WTC11 (cell line): ENCODE measurements at regions of chr19 and their contacts with region 1.

Region 1: DNA sequence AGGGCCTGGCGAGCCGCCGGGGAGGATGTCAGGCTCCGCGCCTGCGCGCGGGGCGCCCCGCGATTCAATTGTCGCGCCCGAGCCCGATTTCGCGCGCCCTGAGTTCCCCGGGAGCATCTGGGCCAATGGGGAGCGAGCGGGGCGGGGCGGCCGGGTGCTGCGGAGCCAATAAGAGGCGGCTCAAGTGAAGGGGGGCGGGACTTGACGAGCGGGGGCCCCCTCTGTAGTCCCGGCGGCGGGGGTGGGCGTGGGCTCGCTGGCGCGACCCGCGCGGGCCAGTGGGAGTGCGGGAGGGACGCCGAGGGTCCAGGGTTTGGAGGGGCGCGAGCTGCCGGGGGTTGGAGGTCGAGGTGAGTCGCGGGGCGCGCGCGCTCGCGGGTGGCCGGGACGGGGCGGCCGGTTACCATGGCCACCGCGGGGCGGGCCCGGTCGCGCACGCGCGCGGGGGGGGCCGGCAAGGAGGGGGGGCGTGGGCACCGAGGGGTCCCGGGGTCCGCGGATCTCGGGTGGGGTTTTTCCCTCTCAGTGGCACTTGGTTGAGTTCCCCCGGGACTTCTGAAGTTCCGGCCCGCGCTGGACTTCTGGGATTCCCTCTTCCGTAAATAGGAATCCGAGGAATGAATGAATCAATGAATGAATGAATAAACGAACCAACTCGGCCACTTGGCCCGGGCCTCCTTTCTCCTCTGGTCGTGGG is 744 bp downstream of the UHRF1 start:
- DNase-seq: peak; percentile 92
- ATAC-seq: peak; percentile 86
- H3K4me3 Mint-ChIP-seq: peak overlapping the region; percentile 77
- H3K27ac Mint-ChIP-seq: no peak overlapping the region
- H3K4me1 Mint-ChIP-seq: peaks cover 22% of the 10 kb centered on the region
- H3K27me3 Mint-ChIP-seq: peaks cover 28% of the 10 kb centered on the region
- CTCF ChIP-seq: no peak

Region 2: DNA sequence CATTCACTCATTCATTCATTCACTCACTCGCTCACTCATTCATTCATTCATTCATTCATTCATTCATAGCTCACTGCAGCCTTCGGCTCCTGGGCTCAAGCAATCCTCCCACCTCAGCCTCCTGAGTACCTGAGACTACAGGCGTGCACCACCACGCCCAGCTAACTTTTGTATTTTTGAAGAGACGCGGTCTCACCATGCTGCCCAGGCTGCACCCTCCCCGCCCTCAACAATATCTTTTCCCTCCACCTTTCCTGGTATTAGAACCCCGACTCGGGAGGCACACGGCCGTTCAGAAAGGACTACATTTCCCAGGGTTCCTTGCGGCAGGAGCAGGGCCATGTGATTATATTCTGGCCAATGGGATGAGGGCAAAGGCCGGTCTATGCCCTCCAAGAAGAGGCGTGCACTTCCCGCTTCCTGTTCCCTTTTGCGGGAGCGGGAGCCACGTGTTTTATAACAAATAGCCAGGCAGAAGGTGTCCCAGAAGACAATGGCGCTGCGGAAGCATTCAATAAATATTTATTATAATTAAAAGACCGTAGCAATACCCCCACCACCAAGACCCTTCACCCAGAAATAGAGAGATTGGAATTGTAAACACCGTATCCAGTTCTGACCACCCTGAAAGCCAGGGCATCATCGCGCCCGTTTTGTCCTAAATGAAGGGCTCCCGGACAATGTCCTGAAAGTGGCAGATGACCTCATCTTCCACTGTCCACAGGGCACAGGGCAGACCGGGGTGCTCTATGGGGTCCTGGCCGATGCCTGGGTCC is 94.4 kb before region 1 on chr19:
- CTCF ChIA-PET with region 1: interaction called, 55 read pairs
- POLR2A ChIA-PET with region 1: no interaction called
- DNase-seq: peak; percentile 86
- ATAC-seq: peak; percentile 82
- H3K4me3 Mint-ChIP-seq: peak overlapping the region; percentile 58
- H3K27ac Mint-ChIP-seq: no peak overlapping the region
- H3K4me1 Mint-ChIP-seq: peaks cover 2% of the 10 kb centered on the region; the same call in 1 of the 2 replicates
- H3K27me3 Mint-ChIP-seq: peaks cover 25% of the 10 kb centered on the region
- CTCF ChIP-seq: no peak

Region 3: GRCh38 chr19:4867534-4868285 is 42.3 kb before region 1 on chr19 and contains the start of gene PLIN3:
- CTCF ChIA-PET with region 1: interaction called, 64 read pairs
- POLR2A ChIA-PET with region 1: interaction called, 4 read pairs
- DNase-seq: peak; percentile 96
- ATAC-seq: peak; percentile 95
- H3K4me3 Mint-ChIP-seq: peak within 1 kb of the TSS; percentile 80
- H3K27ac Mint-ChIP-seq: peak within 1 kb of the TSS; percentile 66
- H3K4me1 Mint-ChIP-seq: peaks cover 8% of the 10 kb centered on the region
- H3K27me3 Mint-ChIP-seq: no peaks in the 10 kb centered on the region; the same call in 1 of the 2 replicates
- CTCF ChIP-seq: no peak
- total RNA-seq, gene PLIN3: 61.3 to 72.1 TPM (median 71.2 TPM) in 3 replicates

Region 4: GRCh38 chr19:4889034-4889815 is 20.8 kb before region 1 on chr19:
- CTCF ChIA-PET with region 1: interaction called, 13 read pairs
- POLR2A ChIA-PET with region 1: no interaction called
- DNase-seq: no peak
- ATAC-seq: no peak
- H3K4me3 Mint-ChIP-seq: no peak overlapping the region
- H3K27ac Mint-ChIP-seq: no peak overlapping the region
- H3K4me1 Mint-ChIP-seq: no peaks in the 10 kb centered on the region
- H3K27me3 Mint-ChIP-seq: peaks cover 50% of the 10 kb centered on the region
- CTCF ChIP-seq: no peak